ENCODE measurements at regions of chr14 and their contacts with region 1.

Region 1: DNA sequence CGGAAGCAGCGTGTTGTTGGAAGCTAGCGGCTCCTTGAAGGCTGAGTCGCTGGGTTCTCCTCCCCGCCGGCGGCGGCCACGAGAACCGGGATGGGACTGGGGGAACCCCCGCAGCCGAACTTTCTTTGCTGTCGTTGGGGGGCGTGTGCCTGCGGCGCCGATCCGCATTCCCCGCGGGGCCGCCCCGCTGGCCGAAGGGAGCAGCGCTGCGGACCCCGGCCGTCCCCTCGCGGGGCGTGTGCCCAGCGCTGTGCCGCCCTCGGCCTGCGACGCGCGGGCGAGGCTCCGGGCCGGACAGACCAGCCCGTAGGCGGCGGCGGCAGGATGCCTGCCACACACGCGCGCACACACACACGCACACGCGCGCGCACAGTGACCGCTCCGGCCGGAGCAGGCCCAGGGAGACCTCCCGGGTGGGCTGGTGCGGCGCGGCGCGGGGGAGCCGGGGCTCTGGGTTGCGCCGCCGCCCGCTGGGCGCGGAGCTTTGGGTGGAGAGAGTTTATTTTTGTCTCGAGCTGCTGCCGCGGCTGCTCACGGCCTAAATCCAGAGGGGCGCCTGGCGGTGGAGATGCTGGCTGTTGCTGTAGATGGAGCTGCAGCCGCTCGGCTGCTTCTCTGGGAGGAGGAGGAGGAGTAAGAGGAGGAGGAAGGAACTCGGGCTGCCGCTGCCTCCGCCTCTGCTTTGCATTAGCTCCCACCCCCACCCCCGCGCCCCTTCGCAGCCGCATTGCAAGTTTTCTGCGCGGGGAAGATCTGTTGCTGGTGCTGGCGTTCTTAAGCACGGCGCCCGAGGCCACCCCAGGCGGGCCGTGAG is at the start of gene SAMD4A:
- DNase-seq: peak; percentile 86
- ATAC-seq: peak; percentile 39
- H3K4me3 ChIP-seq: peak within 1 kb of the TSS; percentile 94
- H3K27ac ChIP-seq: peak within 1 kb of the TSS; percentile 97
- H3K4me1 ChIP-seq: peaks cover 11% of the 10 kb centered on the region
- H3K27me3 ChIP-seq: no peaks in the 10 kb centered on the region
- CTCF ChIP-seq: peak; percentile 25; the same call in 1 of the 2 replicates
- POLR2A ChIP-seq: peak; percentile 28; the same call in 1 of the 2 replicates
- RAD21 ChIP-seq: 0 out of 2 replicates have a peak, but pooled peaks have one; percentile 22
- total RNA-seq, gene SAMD4A: 36.7 and 38.2 TPM in 2 replicates

Region 2: DNA sequence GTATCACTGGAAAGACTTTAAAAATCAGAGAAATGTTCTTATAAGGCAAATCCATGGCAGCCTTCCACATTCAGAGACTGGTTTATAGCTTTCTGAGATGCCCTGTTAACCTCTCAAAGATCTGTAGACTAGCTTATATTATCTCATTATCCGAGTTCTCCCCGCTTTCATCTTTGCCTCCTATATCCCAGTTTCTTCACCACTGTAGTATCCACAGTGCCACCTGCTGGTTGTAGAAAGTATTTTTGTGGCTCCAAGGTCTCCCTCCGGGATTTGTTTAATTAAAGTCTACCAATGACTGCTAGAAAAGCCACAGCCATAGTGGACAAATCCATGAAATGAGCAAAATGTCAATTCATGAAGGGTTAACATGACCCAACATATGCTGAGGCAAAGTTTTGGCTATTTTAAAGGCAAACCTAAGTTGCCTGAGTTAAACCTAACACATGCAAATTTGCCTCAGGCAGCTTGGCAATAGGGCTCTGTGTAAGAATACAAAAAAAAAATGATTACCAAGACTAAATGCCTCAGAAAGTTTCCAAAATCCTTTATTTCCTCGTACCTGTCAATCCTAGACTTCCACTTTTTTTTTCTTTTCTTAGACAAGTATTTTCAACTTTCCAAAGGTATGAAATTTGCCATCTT is 391.2 kb before region 1 on chr14:
- CTCF ChIA-PET with region 1: no interaction called
- POLR2A ChIA-PET with region 1: no interaction called
- dilution Hi-C with region 1: no loop called
- in situ Hi-C with region 1: no loop called
- intact Hi-C with region 1: no loop called
- DNase-seq: peak; percentile 73
- ATAC-seq: peak; percentile 83
- H3K4me3 ChIP-seq: no peak overlapping the region
- H3K27ac ChIP-seq: no peak overlapping the region
- H3K4me1 ChIP-seq: peaks cover 9% of the 10 kb centered on the region; the same call in 1 of the 2 replicates
- H3K27me3 ChIP-seq: peaks cover 8% of the 10 kb centered on the region
- CTCF ChIP-seq: peak; percentile 84
- POLR2A ChIP-seq: no peak
- RAD21 ChIP-seq: peak; percentile 81

Region 3: DNA sequence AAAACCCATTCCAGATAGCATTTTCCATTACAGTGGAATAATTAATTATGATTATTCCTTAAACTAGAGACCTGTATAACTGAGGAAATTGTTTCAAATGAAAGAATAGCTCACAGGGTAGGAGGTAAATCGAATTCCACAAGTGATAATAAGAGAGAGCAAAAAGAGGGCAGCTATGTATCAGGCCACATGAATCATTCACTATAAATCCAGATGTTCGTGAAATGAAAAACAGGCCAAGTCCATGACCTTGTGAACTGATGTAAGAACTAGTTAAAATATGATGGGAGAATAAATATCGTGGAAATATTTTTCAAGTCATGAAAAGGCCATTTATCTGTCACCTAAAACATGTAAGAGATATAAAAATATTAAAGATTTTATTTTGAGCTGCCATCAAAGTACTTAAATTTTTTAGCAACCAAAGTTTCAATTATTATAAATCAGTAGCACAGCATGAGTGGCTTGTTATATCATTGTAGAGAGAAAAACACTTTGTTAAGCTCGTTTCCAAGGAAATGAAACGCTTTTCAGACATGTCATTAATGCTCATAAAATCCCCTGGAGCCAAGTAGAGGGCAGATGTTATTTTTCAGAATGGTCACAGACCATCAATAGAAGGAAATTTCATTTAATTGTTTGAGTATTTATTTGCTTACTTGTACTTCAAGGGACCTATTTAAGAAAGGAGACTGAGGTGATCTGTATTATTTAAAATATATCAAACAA is 290.5 kb before region 1 on chr14:
- CTCF ChIA-PET with region 1: no interaction called
- POLR2A ChIA-PET with region 1: no interaction called
- dilution Hi-C with region 1: no loop called
- in situ Hi-C with region 1: no loop called
- intact Hi-C with region 1: no loop called
- DNase-seq: no peak
- ATAC-seq: no peak
- H3K4me3 ChIP-seq: no peak overlapping the region
- H3K27ac ChIP-seq: no peak overlapping the region
- H3K4me1 ChIP-seq: no peaks in the 10 kb centered on the region
- H3K27me3 ChIP-seq: peaks cover 12% of the 10 kb centered on the region
- CTCF ChIP-seq: no peak
- POLR2A ChIP-seq: no peak
- RAD21 ChIP-seq: no peak

Region 4: GRCh38 chr14:54299410-54300363 is 266.9 kb before region 1 on chr14:
- CTCF ChIA-PET with region 1: no interaction called
- POLR2A ChIA-PET with region 1: no interaction called
- dilution Hi-C with region 1: no loop called
- in situ Hi-C with region 1: no loop called
- intact Hi-C with region 1: no loop called
- DNase-seq: peak; percentile 32
- ATAC-seq: no peak
- H3K4me3 ChIP-seq: no peak overlapping the region
- H3K27ac ChIP-seq: no peak overlapping the region
- H3K4me1 ChIP-seq: no peaks in the 10 kb centered on the region
- H3K27me3 ChIP-seq: peaks cover 43% of the 10 kb centered on the region
- CTCF ChIP-seq: no peak
- POLR2A ChIP-seq: no peak
- RAD21 ChIP-seq: no peak

Region 5: DNA sequence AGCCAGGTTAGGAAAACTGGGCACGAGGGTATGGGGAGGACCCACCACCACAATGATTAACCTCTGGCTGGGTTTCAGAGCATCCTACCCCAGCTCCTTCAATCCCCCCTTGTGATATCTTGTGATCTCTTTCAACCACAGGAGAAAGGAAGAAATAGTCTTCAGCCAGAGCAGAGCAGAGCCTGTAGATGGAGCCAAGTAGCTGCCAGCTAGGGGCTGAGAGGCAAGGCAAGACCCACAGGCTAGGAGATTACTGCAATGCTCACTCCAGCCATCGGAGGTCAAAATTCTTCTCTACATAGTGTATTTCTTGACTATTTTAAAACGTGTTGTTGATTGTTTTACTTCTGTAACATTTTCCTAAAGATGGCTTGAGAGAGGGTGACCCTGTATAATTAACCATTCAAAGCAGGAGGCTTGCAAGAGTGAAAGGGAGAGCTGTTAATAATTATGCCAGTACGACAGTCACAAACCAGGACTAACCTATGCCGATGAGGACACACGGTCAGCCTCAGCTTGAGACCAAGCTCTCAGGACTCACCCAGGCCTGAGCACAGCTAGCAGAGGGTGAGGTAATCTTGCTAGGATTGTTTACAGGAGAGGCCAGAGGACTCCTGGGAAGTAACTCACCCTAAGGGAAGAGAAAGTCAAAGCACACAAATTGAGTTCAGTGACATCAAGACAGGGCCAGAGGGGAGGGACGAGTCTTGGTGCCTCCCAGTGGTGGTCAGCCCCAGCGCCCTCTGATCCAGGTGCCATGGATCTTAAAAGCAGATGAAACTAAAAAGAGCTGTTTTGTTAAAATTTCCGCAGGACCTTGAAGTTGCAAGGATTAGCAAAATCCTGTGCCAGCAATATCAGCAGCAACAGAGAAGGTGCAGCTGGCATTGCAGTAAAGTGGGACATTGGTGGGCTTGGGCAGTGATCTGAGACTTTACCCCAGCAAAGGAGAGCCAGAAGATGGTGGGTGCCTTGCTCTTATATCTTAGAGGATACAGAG is 199.6 kb before region 1 on chr14:
- CTCF ChIA-PET with region 1: no interaction called
- POLR2A ChIA-PET with region 1: no interaction called
- dilution Hi-C with region 1: no loop called
- in situ Hi-C with region 1: no loop called
- intact Hi-C with region 1: loop called (anchors 5 kb)
- DNase-seq: peak; percentile 70
- ATAC-seq: peak; percentile 89
- H3K4me3 ChIP-seq: no peak overlapping the region
- H3K27ac ChIP-seq: peak overlapping the region; percentile 10; the same call in 1 of the 2 replicates
- H3K4me1 ChIP-seq: peaks cover 7% of the 10 kb centered on the region; the same call in 1 of the 2 replicates
- H3K27me3 ChIP-seq: peaks cover 4% of the 10 kb centered on the region; the same call in 1 of the 2 replicates
- CTCF ChIP-seq: peak; percentile 76
- POLR2A ChIP-seq: peak; percentile 46
- RAD21 ChIP-seq: peak; percentile 76

Region 6: GRCh38 chr14:54652188-54652587 is 85.6 kb after region 1 on chr14:
- CTCF ChIA-PET with region 1: interaction called, 3 read pairs
- POLR2A ChIA-PET with region 1: interaction called, 3 read pairs
- dilution Hi-C with region 1: no loop called
- in situ Hi-C with region 1: no loop called
- intact Hi-C with region 1: loop called (anchors 2 kb)
- DNase-seq: peak; percentile 100
- ATAC-seq: peak; percentile 88
- H3K4me3 ChIP-seq: no peak overlapping the region
- H3K27ac ChIP-seq: peak overlapping the region; percentile 64; the same call in 1 of the 2 replicates
- H3K4me1 ChIP-seq: peaks cover 41% of the 10 kb centered on the region
- H3K27me3 ChIP-seq: no peaks in the 10 kb centered on the region
- CTCF ChIP-seq: no peak
- POLR2A ChIP-seq: no peak
- RAD21 ChIP-seq: no peak; the same call in 1 of the 2 replicates

Region 7: DNA sequence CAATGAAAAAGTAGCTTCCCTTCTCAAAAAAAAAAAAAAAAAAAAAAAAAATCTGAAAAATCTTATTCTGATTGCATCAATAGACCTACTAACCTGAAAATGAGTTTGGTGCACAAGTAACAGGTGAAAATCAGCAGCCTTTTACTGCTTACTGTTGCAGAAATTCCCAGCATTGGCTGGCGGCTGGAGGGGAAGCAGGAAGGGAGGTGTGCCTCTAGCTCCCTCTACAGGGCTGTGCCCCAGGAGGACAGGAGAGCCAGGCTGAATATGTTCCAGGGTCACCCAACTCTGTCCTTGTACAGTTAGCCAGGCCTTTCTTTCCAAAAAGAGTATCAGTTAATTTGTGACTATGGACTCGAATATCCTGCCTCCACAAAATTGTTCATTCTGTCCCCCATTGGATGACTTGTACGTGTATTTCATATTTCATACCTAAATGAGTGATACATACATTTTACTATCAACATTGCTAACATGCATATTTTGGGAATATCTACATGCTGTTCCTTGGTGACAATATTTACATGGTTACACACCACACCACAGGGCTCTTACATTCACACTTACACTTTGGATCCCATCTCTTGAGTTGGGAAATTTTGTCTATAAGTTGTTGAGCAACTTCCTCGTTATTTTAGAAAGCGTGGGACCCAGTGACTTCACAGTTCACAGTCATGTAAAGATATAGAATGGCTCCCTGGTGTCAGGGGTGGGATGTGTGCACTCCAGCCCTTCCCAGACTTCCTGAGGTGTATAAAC is 125.1 kb after region 1 on chr14:
- CTCF ChIA-PET with region 1: interaction called, 5 read pairs
- POLR2A ChIA-PET with region 1: interaction called, 11 read pairs
- dilution Hi-C with region 1: no loop called
- in situ Hi-C with region 1: loop called (anchors 5 kb)
- intact Hi-C with region 1: loop called (anchors 1 kb)
- DNase-seq: peak; percentile 69
- ATAC-seq: peak; percentile 81
- H3K4me3 ChIP-seq: no peak overlapping the region
- H3K27ac ChIP-seq: no peak overlapping the region
- H3K4me1 ChIP-seq: peaks cover 18% of the 10 kb centered on the region
- H3K27me3 ChIP-seq: no peaks in the 10 kb centered on the region
- CTCF ChIP-seq: peak; percentile 88
- POLR2A ChIP-seq: peak; percentile 39; the same call in 1 of the 2 replicates
- RAD21 ChIP-seq: peak; percentile 92

Region 8: DNA sequence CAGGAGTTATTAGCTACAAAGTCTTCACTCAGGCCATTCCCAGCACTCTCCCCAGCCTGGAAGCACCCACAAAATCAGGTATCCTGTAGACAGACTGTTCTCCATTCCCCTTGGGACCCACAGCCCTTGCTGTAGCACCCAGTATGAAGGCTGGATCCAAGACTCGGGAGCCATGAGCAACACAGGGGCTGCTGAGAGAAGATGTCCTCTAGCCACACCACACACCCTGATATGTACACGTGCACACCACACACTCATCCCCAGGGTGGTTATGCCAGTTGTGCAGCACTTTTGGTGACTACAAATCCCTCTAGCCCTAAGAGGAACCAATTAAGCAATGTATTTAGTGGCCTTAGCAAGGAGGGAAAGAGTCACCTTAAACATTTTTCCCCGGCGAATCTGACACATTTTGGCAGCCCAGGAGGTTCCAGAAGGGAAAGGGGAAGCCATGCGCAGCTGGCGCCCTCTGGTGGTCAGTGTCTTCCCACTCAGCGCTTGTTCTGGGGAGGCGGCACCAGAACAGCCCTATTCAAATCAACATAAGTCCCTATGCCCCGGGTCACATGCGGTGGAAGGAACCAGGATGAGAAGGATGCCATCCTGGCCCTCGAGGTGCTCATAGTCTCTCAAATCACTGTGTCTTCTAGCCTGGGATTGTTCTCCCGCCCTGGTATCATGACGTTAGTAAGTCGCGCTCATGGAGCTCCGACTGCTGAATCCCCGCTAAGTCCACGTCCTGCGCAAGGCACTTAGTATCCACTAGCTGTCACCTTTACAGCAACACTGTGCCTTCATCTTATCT is 239.1 kb after region 1 on chr14:
- CTCF ChIA-PET with region 1: interaction called, 6 read pairs
- POLR2A ChIA-PET with region 1: no interaction called
- dilution Hi-C with region 1: no loop called
- in situ Hi-C with region 1: no loop called
- intact Hi-C with region 1: loop called (anchors 1 kb)
- DNase-seq: peak; percentile 77
- ATAC-seq: peak; percentile 96
- H3K4me3 ChIP-seq: no peak overlapping the region
- H3K27ac ChIP-seq: no peak overlapping the region
- H3K4me1 ChIP-seq: peaks cover 3% of the 10 kb centered on the region; the same call in 1 of the 2 replicates
- H3K27me3 ChIP-seq: no peaks in the 10 kb centered on the region; the same call in none of the 2 replicates
- CTCF ChIP-seq: peak; percentile 94
- POLR2A ChIP-seq: no peak
- RAD21 ChIP-seq: peak; percentile 96